PC-3 (cell line): ENCODE measurements at regions of chr4 and their contacts with region 1.

Region 1: GRCh38 chr4:52103319-52103718 is 52.2 kb downstream of the SPATA18 start:
- DNase-seq: peak; percentile 81
- ATAC-seq: peak; percentile 65
- H3K4me3 ChIP-seq: 0 out of 2 replicates have a peak overlapping the region, but pooled peaks have one; percentile 16
- H3K27ac ChIP-seq: peak overlapping the region; percentile 86
- H3K4me1 ChIP-seq: peaks cover 68% of the 10 kb centered on the region
- H3K27me3 ChIP-seq: no peaks in the 10 kb centered on the region
- CTCF ChIP-seq: peak; percentile 91

Region 2: DNA sequence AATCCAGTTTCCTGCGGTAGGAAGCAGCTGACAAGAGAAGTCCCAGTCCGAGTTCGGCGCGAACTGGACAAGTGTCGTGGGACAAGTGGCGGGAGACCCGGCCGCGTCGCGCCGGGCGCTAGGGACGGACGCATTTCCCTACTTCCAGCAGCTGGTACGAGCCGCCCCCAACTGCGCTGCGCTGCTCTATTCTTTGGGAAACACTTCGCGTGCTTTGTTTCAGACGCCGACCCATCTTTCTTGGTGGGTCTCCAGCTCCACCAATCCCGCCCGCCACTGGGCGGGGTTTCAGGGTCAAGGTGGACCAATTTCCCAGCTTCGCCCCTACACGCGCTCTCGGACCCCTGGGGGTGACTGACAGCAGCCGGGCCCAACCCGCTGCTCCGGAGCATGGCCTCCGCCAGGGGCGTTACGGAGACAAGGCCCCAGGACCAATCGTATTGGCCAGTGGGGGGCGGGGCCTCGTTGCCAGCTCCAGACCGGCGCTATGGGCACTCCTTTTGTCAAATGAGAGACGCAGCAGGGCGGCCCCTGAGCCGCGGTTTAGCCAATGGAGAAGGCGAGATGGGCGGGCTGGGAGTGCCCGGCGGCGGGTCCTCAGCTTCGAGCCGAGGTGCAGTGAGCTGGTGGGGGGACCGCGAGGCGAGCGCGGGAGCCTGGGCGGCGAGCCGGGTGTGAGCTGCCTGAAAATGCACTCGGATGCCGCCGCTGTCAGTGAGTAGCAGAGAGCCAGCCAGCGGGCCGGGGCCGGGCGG is 260.6 kb before region 1 on chr4 and contains the start of gene DCUN1D4:
- CTCF ChIA-PET with region 1: interaction called, 3 read pairs
- POLR2A ChIA-PET with region 1: no interaction called
- intact Hi-C with region 1: loop called (anchors 5 kb)
- DNase-seq: peak; percentile 100
- ATAC-seq: peak; percentile 87
- H3K4me3 ChIP-seq: peak within 1 kb of the TSS; percentile 80
- H3K27ac ChIP-seq: peak within 1 kb of the TSS; percentile 77
- H3K4me1 ChIP-seq: peaks cover 25% of the 10 kb centered on the region
- H3K27me3 ChIP-seq: no peaks in the 10 kb centered on the region
- CTCF ChIP-seq: peak; percentile 16; the same call in 1 of the 2 replicates
- total RNA-seq, gene DCUN1D4: 25.5 and 44.8 TPM in 2 replicates

Region 3: GRCh38 chr4:52028969-52029368 is 74.3 kb before region 1 on chr4:
- CTCF ChIA-PET with region 1: no interaction called
- POLR2A ChIA-PET with region 1: no interaction called
- intact Hi-C with region 1: loop called (anchors 1 kb)
- DNase-seq: peak; percentile 96
- ATAC-seq: peak; percentile 99
- H3K4me3 ChIP-seq: no peak overlapping the region
- H3K27ac ChIP-seq: 0 out of 2 replicates have a peak overlapping the region, but pooled peaks have one; percentile 16
- H3K4me1 ChIP-seq: peaks cover 14% of the 10 kb centered on the region
- H3K27me3 ChIP-seq: no peaks in the 10 kb centered on the region
- CTCF ChIP-seq: no peak

Region 4: DNA sequence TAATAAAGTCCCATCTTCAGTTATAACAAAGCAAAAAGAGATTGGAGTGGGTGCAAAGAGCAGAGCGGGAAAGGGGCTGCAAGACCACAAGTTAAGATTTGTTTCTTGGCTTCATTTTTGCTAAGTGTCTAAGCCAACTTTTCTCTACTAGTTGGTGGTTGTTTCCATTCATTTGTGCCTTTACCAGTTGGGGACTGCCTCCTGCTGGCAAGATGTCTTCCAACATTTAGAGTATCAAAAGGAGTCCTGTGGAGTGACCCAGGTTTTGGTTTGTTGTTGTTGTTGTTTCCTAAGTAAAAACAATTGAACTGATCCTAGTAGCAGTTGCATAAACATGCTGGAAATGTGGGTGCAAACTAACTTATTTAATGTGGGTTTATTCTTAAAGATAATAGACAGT is 68.8 kb after region 1 on chr4:
- CTCF ChIA-PET with region 1: no interaction called
- POLR2A ChIA-PET with region 1: no interaction called
- intact Hi-C with region 1: loop called (anchors 5 kb)
- DNase-seq: peak; percentile 46
- ATAC-seq: no peak
- H3K4me3 ChIP-seq: no peak overlapping the region
- H3K27ac ChIP-seq: no peak overlapping the region
- H3K4me1 ChIP-seq: no peaks in the 10 kb centered on the region
- H3K27me3 ChIP-seq: no peaks in the 10 kb centered on the region
- CTCF ChIP-seq: peak; percentile 61; the same call in 1 of the 2 replicates

Region 5: DNA sequence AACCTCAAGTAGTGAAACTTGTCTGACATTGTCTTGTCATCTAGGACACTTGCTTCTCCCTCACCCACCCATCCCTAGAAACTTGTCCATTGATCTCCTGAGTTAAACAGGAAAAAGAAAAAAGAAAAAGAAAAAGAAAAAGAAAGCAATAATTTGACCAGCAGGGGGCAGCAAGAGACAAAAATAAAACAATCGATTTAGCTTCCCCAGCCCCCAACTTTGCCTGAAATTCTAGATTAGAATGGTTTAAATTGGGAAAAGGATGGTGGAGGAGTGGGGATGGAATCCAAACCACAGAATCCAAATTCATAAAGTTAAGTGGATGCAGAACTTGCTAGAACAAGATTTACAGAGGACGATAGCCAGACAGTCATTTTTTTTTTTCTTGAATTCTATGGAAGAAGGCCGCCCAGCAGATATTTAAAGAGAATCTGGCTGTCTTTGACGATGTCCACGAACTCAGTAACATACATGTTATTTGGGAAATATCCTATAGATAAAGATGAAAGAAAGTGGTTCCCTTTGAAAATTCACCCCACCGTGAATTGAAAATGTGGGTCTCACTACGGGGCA is 272.9 kb after region 1 on chr4:
- CTCF ChIA-PET with region 1: no interaction called
- POLR2A ChIA-PET with region 1: no interaction called
- intact Hi-C with region 1: loop called (anchors 10 kb)
- DNase-seq: peak; percentile 77
- ATAC-seq: no peak; the same call in 1 of the 2 replicates
- H3K4me3 ChIP-seq: no peak overlapping the region
- H3K27ac ChIP-seq: no peak overlapping the region
- H3K4me1 ChIP-seq: peaks cover 11% of the 10 kb centered on the region
- H3K27me3 ChIP-seq: peaks cover 24% of the 10 kb centered on the region
- CTCF ChIP-seq: peak; percentile 88

Region 6: DNA sequence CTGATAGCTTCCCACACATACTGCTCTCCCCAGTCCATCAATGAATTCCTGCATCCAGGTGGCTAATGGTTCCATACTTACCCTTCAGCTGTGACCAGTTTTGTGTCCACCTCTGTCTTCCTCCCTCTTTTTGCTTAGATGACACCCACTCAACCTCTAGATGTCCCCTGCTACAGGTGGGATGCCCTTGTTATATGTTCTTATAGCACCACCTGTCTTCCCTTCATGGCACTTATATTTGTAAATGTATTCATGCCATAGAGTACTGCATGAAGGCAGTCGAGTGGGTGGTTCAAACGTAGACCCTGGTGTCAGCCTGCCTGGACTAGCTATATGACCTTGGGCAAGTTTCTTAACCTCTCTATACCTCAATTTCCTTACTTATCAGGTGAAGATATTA is 562.3 kb after region 1 on chr4:
- CTCF ChIA-PET with region 1: no interaction called
- POLR2A ChIA-PET with region 1: no interaction called
- intact Hi-C with region 1: loop called (anchors 2 kb)
- DNase-seq: peak; percentile 47
- ATAC-seq: peak; percentile 86
- H3K4me3 ChIP-seq: no peak overlapping the region
- H3K27ac ChIP-seq: no peak overlapping the region
- H3K4me1 ChIP-seq: peaks cover under 1% of the 10 kb centered on the region; the same call in 1 of the 2 replicates
- H3K27me3 ChIP-seq: no peaks in the 10 kb centered on the region
- CTCF ChIP-seq: peak; percentile 72

Region 7: DNA sequence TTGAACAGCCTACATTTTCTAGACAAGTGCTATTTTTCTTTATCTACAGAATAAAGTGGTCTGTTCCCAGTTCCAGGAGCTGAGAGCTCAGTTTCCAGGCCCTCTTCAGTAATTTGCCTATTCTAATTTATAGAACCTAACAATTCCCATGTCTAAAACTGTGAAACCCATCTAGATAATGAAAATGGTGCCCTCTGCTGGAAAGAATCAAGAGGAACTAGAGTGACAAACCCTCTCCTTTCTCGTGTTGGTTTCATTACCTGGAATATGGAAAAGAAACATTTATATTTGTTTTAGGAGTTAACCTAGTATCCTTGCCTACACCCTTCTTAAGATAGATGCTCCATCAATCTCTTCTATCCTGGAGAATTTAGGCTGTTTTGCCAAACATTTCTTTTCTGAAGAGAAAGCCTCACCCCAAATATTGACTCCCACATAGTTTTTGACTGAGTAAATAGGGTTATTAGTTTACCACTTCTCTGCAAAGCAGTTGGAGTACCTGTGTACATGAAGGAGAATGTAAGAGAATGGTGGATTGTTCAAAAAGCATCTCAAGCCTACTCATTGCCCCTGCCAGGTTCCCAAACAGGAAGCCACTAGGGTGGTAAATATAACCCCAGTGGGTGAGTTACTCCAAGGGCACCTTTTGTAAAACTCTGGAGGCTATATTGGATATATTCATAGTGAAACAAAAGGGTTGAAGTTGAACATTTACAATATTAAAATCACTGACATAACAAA is 880.4 kb after region 1 on chr4:
- CTCF ChIA-PET with region 1: interaction called, 7 read pairs
- POLR2A ChIA-PET with region 1: no interaction called
- intact Hi-C with region 1: loop called (anchors 1 kb)
- DNase-seq: peak; percentile 83
- ATAC-seq: peak; percentile 80
- H3K4me3 ChIP-seq: no peak overlapping the region
- H3K27ac ChIP-seq: no peak overlapping the region
- H3K4me1 ChIP-seq: peaks cover 12% of the 10 kb centered on the region
- H3K27me3 ChIP-seq: no peaks in the 10 kb centered on the region
- CTCF ChIP-seq: peak; percentile 90